GM12878 (cell line): ENCODE measurements at regions of chr6 and their contacts with region 1.

Region 1: DNA sequence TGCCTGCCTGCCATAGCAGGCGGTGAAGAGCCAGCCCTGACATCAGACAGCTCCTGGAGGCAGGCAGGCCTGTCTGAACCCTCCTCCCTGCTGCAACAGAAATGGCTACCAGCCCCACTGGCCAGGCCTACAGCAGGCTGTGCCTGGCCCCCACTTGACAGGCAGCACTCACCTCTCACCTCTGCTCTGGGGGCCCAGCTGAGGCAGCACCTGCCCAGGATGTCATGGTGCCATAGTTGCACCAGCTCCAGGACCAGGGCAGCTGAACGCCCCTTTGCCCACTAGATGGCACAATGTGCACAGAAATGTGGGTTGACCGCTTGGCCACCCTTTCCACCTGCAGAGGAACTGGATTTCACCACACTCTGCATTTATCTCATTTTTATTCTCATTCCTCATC is 30.6 kb downstream of the MRPL14 start:
- DNase-seq: peak; percentile 27
- ATAC-seq: peak; percentile 99
- H3K4me3 ChIP-seq: no peak overlapping the region
- H3K27ac ChIP-seq: no peak overlapping the region
- H3K4me1 ChIP-seq: no peaks in the 10 kb centered on the region
- H3K27me3 ChIP-seq: no peaks in the 10 kb centered on the region
- CTCF ChIP-seq: peak; percentile 85 to 94 (median 85)
- EP300 ChIP-seq: no peak
- POLR2A ChIP-seq: no peak
- RAD21 ChIP-seq: peak; percentile 90

Region 2: DNA sequence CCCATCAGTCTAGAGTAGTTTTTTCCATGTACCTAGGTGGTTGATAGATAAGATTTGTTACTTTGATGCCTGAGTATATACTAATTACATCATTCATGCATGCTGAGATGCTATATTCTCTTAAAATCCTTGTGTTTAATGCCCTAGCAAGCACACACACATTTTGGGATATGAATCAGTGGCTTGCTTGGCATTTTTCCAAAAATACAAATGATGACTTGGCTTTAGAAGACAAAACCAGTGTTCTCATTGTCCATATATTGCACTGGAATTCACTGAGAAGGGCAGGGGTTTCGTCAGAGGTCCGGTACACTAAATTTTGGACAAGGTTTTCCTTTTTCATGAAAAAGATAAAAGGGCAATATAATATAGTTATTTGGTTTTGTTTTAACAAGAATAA is 492.4 kb before region 1 on chr6:
- CTCF ChIA-PET with region 1: no interaction called
- POLR2A ChIA-PET with region 1: no interaction called
- RAD21 ChIA-PET with region 1: no interaction called
- SMC1A ChIA-PET with region 1: no interaction called
- in situ Hi-C with region 1: no loop called
- intact Hi-C with region 1: no loop called
- DNase-seq: no peak
- ATAC-seq: no peak
- H3K4me3 ChIP-seq: no peak overlapping the region
- H3K27ac ChIP-seq: no peak overlapping the region
- H3K4me1 ChIP-seq: no peaks in the 10 kb centered on the region
- H3K27me3 ChIP-seq: no peaks in the 10 kb centered on the region
- CTCF ChIP-seq: no peak
- EP300 ChIP-seq: no peak
- POLR2A ChIP-seq: no peak
- RAD21 ChIP-seq: no peak

Region 3: GRCh38 chr6:44010411-44011349 is 85.9 kb before region 1 on chr6:
- CTCF ChIA-PET with region 1: no interaction called
- POLR2A ChIA-PET with region 1: no interaction called
- RAD21 ChIA-PET with region 1: no interaction called
- SMC1A ChIA-PET with region 1: no interaction called
- in situ Hi-C with region 1: no loop called
- intact Hi-C with region 1: no loop called
- DNase-seq: no peak
- ATAC-seq: peak; percentile 18
- H3K4me3 ChIP-seq: no peak overlapping the region
- H3K27ac ChIP-seq: no peak overlapping the region
- H3K4me1 ChIP-seq: no peaks in the 10 kb centered on the region
- H3K27me3 ChIP-seq: no peaks in the 10 kb centered on the region; a peak in 2 of 4 replicates
- CTCF ChIP-seq: no peak
- EP300 ChIP-seq: no peak
- POLR2A ChIP-seq: no peak
- RAD21 ChIP-seq: no peak

Region 4: GRCh38 chr6:44111434-44112417 is 15.1 kb after region 1 on chr6:
- CTCF ChIA-PET with region 1: interaction called, 19 read pairs
- POLR2A ChIA-PET with region 1: interaction called, 4 read pairs
- RAD21 ChIA-PET with region 1: interaction called, 3 read pairs
- SMC1A ChIA-PET with region 1: interaction called, 3 read pairs
- in situ Hi-C with region 1: no loop called
- intact Hi-C with region 1: no loop called
- DNase-seq: no peak
- ATAC-seq: no peak
- H3K4me3 ChIP-seq: no peak overlapping the region
- H3K27ac ChIP-seq: no peak overlapping the region
- H3K4me1 ChIP-seq: no peaks in the 10 kb centered on the region
- H3K27me3 ChIP-seq: no peaks in the 10 kb centered on the region
- CTCF ChIP-seq: no peak
- EP300 ChIP-seq: no peak
- POLR2A ChIP-seq: no peak
- RAD21 ChIP-seq: no peak

Region 5: DNA sequence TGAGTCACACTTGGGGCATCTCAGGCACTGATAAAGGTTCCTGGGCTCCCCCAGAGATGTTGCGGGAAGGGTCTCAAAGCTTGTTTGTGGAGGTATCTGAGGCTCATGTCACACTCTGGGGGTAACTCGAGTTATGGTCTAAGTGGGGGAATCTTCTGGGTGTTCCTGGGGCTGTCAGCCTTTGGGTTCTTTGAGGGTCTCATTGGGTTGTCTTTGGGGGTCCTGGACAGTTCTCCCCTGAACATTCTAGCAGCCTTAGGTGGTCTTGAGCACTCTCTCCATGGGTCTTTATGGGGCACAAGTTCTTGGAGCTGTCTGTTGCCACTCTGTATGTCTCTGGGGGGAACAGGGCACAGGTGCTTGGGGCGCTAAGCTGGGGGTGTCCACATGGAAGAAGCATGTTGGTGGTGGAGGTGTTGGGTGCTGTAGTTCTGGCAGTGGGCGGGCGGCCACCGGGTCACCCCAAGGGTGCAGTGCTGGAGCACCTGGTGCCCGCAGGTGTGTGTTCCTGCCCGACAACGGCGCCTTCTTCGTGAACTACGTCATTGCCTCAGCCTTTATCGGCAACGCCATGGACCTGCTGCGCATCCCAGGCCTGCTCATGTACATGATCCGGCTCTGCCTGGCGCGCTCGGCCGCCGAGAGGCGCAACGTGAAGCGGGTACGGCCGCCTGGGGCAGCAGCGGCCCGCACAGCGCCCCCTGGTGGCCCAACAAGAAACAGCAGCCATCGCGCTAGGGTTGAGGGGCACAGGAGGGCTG is 54.9 kb after region 1 on chr6:
- CTCF ChIA-PET with region 1: interaction called, 85 read pairs
- POLR2A ChIA-PET with region 1: no interaction called
- RAD21 ChIA-PET with region 1: interaction called, 10 read pairs
- SMC1A ChIA-PET with region 1: interaction called, 17 read pairs
- in situ Hi-C with region 1: loop called (anchors 10 kb)
- intact Hi-C with region 1: loop called (anchors 1 kb)
- DNase-seq: no peak
- ATAC-seq: peak; percentile 98
- H3K4me3 ChIP-seq: no peak overlapping the region
- H3K27ac ChIP-seq: no peak overlapping the region
- H3K4me1 ChIP-seq: no peaks in the 10 kb centered on the region; the same call in 1 of the 2 replicates
- H3K27me3 ChIP-seq: no peaks in the 10 kb centered on the region
- CTCF ChIP-seq: peak; percentile 92 to 99 (median 99); a peak in 5 of 6 replicates
- EP300 ChIP-seq: no peak
- POLR2A ChIP-seq: no peak; the same call in 1 of the 2 replicates
- RAD21 ChIP-seq: peak; percentile 79

Region 6: DNA sequence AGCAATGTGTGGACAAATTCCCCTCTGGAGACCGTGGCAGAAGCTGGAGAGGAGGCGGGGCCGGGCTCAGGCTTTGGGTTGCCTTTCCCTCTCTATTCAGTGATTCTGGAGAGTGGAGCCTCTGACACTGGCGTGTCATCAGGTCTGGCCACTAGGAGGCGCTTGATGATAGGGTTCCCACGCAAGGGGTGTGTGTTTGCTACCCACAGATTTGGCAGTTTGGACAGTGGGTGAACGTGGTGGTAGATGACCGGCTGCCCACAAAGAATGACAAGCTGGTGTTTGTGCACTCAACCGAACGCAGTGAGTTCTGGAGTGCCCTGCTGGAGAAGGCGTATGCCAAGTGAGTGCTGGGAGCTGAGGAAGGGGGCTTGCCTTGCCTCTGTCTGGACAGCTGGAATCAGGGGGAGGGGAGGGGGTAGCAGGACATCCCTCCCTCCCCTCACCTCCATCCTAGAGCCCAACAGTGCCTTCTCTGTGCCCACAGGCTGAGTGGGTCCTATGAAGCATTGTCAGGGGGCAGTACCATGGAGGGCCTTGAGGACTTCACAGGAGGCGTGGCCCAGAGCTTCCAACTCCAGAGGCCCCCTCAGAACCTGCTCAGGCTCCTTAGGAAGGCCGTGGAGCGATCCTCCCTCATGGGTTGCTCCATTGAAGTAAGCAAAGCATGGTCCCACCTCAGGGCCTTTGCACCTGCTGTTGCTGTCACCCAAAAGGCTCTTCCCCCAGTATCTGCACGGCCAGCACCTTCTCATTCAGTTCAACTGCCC is 76.3 kb after region 1 on chr6:
- CTCF ChIA-PET with region 1: interaction called, 12 read pairs
- POLR2A ChIA-PET with region 1: no interaction called
- RAD21 ChIA-PET with region 1: interaction called, 4 read pairs
- SMC1A ChIA-PET with region 1: interaction called, 3 read pairs
- in situ Hi-C with region 1: no loop called
- intact Hi-C with region 1: no loop called
- DNase-seq: peak; percentile 30
- ATAC-seq: peak; percentile 89
- H3K4me3 ChIP-seq: no peak overlapping the region
- H3K27ac ChIP-seq: no peak overlapping the region
- H3K4me1 ChIP-seq: peaks cover 16% of the 10 kb centered on the region
- H3K27me3 ChIP-seq: no peaks in the 10 kb centered on the region; a peak in 2 of 4 replicates
- CTCF ChIP-seq: peak; percentile 92 to 98 (median 98); a peak in 5 of 6 replicates
- EP300 ChIP-seq: no peak
- POLR2A ChIP-seq: no peak
- RAD21 ChIP-seq: peak; percentile 98

Region 7: GRCh38 chr6:44338228-44339122 is 241.9 kb after region 1 on chr6:
- CTCF ChIA-PET with region 1: interaction called, 17 read pairs
- POLR2A ChIA-PET with region 1: no interaction called
- RAD21 ChIA-PET with region 1: interaction called, 6 read pairs
- SMC1A ChIA-PET with region 1: interaction called, 8 read pairs
- in situ Hi-C with region 1: no loop called
- intact Hi-C with region 1: loop called (anchors 1 kb)
- DNase-seq: peak; percentile 34
- ATAC-seq: peak; percentile 96
- H3K4me3 ChIP-seq: no peak overlapping the region
- H3K27ac ChIP-seq: no peak overlapping the region
- H3K4me1 ChIP-seq: no peaks in the 10 kb centered on the region
- H3K27me3 ChIP-seq: peaks cover 2 to 4% of the 10 kb centered on the region in 2 experiments; a peak in 3 of 4 replicates
- CTCF ChIP-seq: peak; percentile 71 to 92 (median 82); a peak in 5 of 6 replicates
- EP300 ChIP-seq: no peak
- POLR2A ChIP-seq: no peak
- RAD21 ChIP-seq: peak; percentile 96